A549 (cell line): ENCODE measurements at regions of chr5 and their contacts with region 1.

Region 1: GRCh38 chr5:170216266-170216864 is 16.4 kb upstream of the C5orf58 start:
- DNase-seq: peak; percentile 73 to 77
- ATAC-seq: peak; percentile 81 to 92
- H3K4me3 ChIP-seq: no peak overlapping the region
- H3K27ac ChIP-seq: no peak overlapping the region
- H3K4me1 ChIP-seq: peaks cover 33% of the 10 kb centered on the region
- CTCF ChIP-seq: peak; percentile 84
- EP300 ChIP-seq: no peak
- POLR2A ChIP-seq: no peak
- RAD21 ChIP-seq: peak; percentile 94 to 99

Region 2: DNA sequence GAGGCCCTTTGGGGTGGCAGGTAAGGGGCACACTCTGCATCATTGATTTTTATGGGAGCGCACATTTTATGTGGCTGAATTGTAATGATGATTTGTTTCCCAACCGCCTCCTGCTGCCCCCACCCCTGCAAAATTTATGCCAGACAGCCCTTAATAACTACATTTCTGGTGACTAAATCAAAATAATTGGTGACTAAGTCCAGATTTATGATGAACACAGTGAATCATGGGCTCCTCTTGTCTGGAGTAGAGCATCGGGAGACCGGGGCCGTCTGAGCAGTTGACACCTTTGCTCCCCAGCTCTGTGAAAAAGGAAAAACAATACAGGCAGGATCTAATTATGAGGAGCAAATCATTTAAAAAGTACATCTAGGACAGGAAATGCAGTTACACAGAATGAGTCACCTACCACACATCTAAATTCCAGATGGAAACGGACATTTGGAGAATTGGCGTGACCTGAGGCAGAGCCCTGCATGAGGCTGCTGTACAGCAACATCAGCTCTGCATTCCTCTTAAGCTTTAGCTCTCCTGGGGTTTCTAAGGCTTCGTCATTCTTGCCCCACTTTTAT is 520.4 kb before region 1 on chr5:
- CTCF ChIA-PET with region 1: interaction called, 12 read pairs
- POLR2A ChIA-PET with region 1: no interaction called
- DNase-seq: peak; percentile 85 to 86
- ATAC-seq: peak; percentile 89 to 90
- H3K4me3 ChIP-seq: no peak overlapping the region
- H3K27ac ChIP-seq: peak overlapping the region; percentile 83 to 85
- H3K4me1 ChIP-seq: peaks cover 42% of the 10 kb centered on the region
- CTCF ChIP-seq: no peak
- EP300 ChIP-seq: peak; percentile 60 to 83; a peak in 4 of 5 replicates
- POLR2A ChIP-seq: no peak
- RAD21 ChIP-seq: peak in 1 of 2 experiments; percentile 42; a peak in 2 of 5 replicates

Region 3: GRCh38 chr5:170247363-170247762 is 31.0 kb after region 1 on chr5:
- CTCF ChIA-PET with region 1: no interaction called
- POLR2A ChIA-PET with region 1: no interaction called
- DNase-seq: no peak
- ATAC-seq: no peak
- H3K4me3 ChIP-seq: no peak overlapping the region
- H3K27ac ChIP-seq: no peak overlapping the region
- H3K4me1 ChIP-seq: no peaks in the 10 kb centered on the region
- CTCF ChIP-seq: no peak
- EP300 ChIP-seq: no peak
- POLR2A ChIP-seq: no peak
- RAD21 ChIP-seq: no peak

Region 4: DNA sequence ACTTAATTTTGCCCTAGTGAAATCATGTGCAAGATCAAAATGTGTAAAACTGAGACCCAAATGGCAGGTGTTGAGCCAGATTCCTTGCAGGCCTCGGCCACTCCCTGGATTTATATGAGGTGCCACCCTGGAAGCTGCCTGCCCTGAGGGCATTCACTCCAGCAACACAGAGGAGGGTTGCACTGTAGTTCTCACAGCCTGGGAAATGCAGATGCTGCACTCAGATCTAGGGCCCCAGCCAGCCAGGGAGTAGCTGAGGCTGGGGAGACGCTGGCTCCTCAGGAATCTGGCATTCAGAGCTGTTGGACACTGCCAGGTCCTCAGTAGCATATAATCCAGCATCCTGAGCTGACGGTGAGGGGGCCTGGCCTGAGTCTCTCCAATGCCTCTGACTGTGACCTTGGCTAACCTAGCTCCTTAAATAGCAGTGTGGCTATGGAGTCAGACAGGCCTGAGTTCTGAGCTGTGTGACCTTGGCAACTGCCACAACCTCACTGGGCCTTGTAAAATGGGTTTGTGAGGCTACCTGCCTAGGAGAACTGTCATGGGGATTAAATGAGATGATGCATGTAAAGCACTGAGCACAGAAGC is 164.1 kb after region 1 on chr5:
- CTCF ChIA-PET with region 1: no interaction called
- POLR2A ChIA-PET with region 1: no interaction called
- DNase-seq: no peak
- ATAC-seq: no peak
- H3K4me3 ChIP-seq: no peak overlapping the region
- H3K27ac ChIP-seq: no peak overlapping the region
- H3K4me1 ChIP-seq: no peaks in the 10 kb centered on the region
- CTCF ChIP-seq: no peak
- EP300 ChIP-seq: no peak
- POLR2A ChIP-seq: no peak
- RAD21 ChIP-seq: no peak